ENCODE measurements at regions of chr15 and their contacts with region 1.

Region 1: DNA sequence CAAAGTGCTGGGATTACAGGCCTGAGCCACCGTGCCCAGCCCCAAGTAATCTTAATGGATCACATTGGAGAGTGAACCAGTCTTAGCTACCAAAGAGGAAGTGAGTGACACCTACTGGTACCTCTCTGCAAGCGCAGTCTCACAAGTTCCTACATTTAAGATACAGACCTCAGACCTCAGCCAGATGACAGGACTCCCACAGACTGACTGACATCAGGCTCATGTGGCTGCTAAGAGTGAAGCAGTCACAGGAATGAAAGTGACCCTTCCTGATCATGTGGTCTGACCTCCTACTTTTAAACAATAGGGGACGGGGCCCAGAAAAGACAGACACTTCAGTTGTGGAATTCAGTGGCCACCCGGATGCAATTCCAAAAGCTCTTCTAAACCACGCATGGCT is 36.3 kb upstream of the GNB5 start:
- DNase-seq: peak; percentile 40
- ATAC-seq: peak; percentile 78
- H3K4me3 Mint-ChIP-seq: no peak overlapping the region
- H3K27ac Mint-ChIP-seq: peak overlapping the region; percentile 93
- H3K4me1 Mint-ChIP-seq: peaks cover 84% of the 10 kb centered on the region
- H3K27me3 Mint-ChIP-seq: no peaks in the 10 kb centered on the region
- CTCF ChIP-seq: no peak

Region 2: GRCh38 chr15:51982013-51982769 is 245.3 kb before region 1 on chr15:
- CTCF ChIA-PET with region 1: no interaction called
- POLR2A ChIA-PET with region 1: no interaction called
- intact Hi-C with region 1: loop called (anchors 2 kb)
- DNase-seq: no peak
- ATAC-seq: peak; percentile 90
- H3K4me3 Mint-ChIP-seq: peak overlapping the region; percentile 57
- H3K27ac Mint-ChIP-seq: no peak overlapping the region
- H3K4me1 Mint-ChIP-seq: peaks cover 9% of the 10 kb centered on the region
- H3K27me3 Mint-ChIP-seq: no peaks in the 10 kb centered on the region
- CTCF ChIP-seq: no peak

Region 3: DNA sequence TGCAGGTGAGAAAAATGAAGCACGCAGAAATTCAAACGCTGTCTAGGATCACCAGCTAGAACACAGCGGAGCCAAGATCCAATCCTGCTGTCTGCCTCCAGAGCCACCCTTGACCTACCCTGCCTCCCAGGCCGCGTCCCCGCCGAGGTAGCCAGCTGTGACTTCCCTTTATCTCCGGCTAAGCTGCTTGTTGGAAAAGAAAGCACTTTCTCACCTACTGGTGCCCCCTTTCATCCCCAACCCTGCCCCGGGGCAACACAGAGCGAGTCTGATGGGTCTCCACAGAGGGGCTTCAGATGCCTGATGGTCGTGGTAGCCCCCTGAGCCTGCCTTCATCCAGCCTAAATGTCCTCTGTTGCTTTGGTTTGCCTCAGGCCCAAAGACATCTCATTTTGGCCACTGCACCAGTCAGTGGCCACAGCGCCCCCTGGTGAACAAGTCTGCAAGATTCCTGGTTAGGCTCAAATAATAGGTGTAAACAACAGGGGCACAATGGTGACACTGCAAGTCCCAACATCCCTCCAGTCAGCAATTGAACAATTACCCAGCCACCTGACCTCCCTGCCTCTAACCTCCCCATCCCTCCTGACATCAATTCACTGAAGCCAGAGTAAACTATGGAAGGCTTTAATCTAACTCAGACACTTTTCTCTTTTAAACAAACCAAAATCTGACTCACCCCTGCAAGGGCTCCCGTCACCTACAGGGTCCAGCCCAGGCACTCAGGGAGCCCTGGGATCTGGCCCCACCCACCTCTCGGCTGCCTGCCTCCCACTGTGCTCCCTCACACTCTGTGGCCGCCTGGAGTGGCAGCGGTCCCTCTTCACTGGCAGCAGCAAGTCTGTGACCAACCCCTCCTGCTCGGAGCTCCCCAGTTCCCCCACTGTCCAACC is 87.6 kb before region 1 on chr15:
- CTCF ChIA-PET with region 1: interaction called, 5 read pairs
- POLR2A ChIA-PET with region 1: interaction called, 6 read pairs
- intact Hi-C with region 1: loop called (anchors 1 kb)
- DNase-seq: peak; percentile 51
- ATAC-seq: no peak
- H3K4me3 Mint-ChIP-seq: no peak overlapping the region
- H3K27ac Mint-ChIP-seq: no peak overlapping the region
- H3K4me1 Mint-ChIP-seq: peaks cover 23% of the 10 kb centered on the region
- H3K27me3 Mint-ChIP-seq: no peaks in the 10 kb centered on the region
- CTCF ChIP-seq: peak; percentile 39

Region 4: GRCh38 chr15:52217186-52217585 is 10.3 kb before region 1 on chr15:
- CTCF ChIA-PET with region 1: interaction called, 35 read pairs
- POLR2A ChIA-PET with region 1: interaction called, 119 read pairs
- intact Hi-C with region 1: loop called (anchors 1 kb)
- DNase-seq: no peak
- ATAC-seq: peak; percentile 33
- H3K4me3 Mint-ChIP-seq: no peak overlapping the region
- H3K27ac Mint-ChIP-seq: no peak overlapping the region
- H3K4me1 Mint-ChIP-seq: peaks cover 35% of the 10 kb centered on the region
- H3K27me3 Mint-ChIP-seq: no peaks in the 10 kb centered on the region
- CTCF ChIP-seq: no peak

Region 5: GRCh38 chr15:52466134-52466701 is 238.8 kb after region 1 on chr15:
- CTCF ChIA-PET with region 1: no interaction called
- POLR2A ChIA-PET with region 1: interaction called, 11 read pairs
- intact Hi-C with region 1: no loop called
- DNase-seq: peak; percentile 75
- ATAC-seq: peak; percentile 99
- H3K4me3 Mint-ChIP-seq: peak overlapping the region; percentile 25
- H3K27ac Mint-ChIP-seq: peak overlapping the region; percentile 91
- H3K4me1 Mint-ChIP-seq: peaks cover 52% of the 10 kb centered on the region
- H3K27me3 Mint-ChIP-seq: no peaks in the 10 kb centered on the region
- CTCF ChIP-seq: no peak

Measured in activated B cell treated with CpG ODN at 0.5 μM for 24 hours (primary cell).